ENCODE measurements at regions of chr4 and their contacts with region 1.

Region 1: DNA sequence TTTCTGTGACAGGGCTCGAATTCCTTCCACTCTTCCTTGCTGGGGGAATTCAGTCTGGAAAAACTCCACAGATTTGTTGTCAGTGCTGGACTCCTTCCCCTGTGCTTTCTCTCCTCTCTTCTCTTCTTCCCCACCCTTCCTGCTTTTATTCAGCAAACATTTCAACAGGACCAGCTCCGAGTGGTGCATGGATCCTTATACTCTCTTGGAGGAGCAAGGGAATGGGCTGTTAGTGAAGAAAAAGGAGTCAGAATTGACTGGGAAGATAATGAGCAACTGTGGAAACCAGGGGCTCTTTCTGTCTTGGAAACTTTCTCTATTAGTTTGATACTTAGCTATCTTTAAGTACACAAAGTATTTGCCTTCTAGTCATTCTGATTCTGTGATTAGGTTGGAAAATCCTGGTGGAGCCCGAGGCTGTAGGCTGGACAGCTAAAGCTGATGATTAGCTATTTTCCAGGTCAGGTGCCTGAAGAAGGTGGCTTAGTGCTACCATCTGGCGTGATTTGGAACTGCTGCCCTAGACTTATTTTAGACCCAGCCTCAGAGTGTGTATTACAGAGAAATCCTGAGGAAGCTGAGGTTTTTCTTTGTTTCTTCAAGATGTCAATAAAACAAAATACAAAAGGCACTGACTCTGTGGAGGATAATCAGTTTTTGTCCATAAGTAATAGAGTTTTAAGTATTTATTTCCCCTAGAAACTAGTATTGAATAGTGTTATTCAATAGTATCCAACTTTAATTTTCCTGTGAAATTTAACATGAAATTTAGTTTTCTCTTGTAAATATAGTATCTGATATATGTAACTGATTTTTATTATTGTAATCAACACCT is 38.4 kb downstream of the NAP1L5 start:
- DNase-seq: peak; percentile 49 to 67
- H3K4me3 ChIP-seq: no peak overlapping the region
- H3K27ac ChIP-seq: peak overlapping the region; percentile 59
- H3K4me1 ChIP-seq: peaks cover 31% of the 10 kb centered on the region
- H3K27me3 ChIP-seq: no peaks in the 10 kb centered on the region
- CTCF ChIP-seq: peak; percentile 72

Region 2: GRCh38 chr4:88528861-88529260 is 130.4 kb before region 1 on chr4:
- CTCF ChIA-PET with region 1: interaction called, 4 read pairs
- POLR2A ChIA-PET with region 1: interaction called, 6 read pairs
- intact Hi-C with region 1: loop called (anchors 2 kb)
- DNase-seq: no peak
- H3K4me3 ChIP-seq: no peak overlapping the region
- H3K27ac ChIP-seq: no peak overlapping the region
- H3K4me1 ChIP-seq: peaks cover 20% of the 10 kb centered on the region
- H3K27me3 ChIP-seq: no peaks in the 10 kb centered on the region
- CTCF ChIP-seq: peak; percentile 55

Region 3: DNA sequence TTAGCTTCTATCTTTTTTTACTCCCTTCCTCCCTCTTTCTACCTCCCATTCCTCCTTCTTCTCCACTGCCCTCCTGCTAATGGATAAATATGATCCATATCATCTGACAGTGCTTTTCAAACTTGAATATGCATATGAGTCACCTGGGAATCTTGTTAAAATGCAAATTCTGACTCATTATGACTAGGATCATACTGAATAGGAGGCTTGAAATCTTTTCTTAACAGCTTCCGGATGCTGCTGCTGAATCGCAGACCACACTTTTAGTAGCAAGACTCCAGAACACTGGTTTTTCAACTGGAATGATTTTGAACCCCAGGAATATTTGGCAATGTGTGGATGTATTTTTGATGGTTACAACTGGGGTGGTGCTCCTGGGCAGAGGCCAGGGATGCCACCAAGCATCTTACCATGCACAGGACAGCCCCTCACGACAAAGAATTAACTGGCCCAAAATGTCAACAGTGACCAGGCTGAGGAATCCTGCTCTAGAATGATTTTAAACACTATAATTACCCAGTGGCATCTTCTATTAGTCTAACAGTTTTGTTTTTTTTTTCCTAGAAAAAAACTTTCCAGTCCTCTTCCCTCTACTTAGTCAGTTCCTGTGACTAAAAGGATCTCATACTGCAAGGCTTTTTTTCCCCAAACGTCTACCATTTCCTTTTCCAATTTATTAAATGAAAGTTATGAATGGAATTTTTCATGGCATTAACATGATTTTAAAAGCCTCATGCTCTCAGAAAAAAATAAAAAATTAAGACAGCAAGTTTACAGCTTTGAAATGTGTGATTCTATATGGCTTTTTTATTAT is 125.1 kb before region 1 on chr4:
- CTCF ChIA-PET with region 1: interaction called, 9 read pairs
- POLR2A ChIA-PET with region 1: interaction called, 9 read pairs
- intact Hi-C with region 1: loop called (anchors 1 kb)
- DNase-seq: peak in 1 of 2 experiments; percentile 55
- H3K4me3 ChIP-seq: no peak overlapping the region
- H3K27ac ChIP-seq: 0 out of 2 replicates have a peak overlapping the region, but pooled peaks have one; percentile 30
- H3K4me1 ChIP-seq: peaks cover 3% of the 10 kb centered on the region; the same call in 1 of the 2 replicates
- H3K27me3 ChIP-seq: no peaks in the 10 kb centered on the region
- CTCF ChIP-seq: no peak

Region 4: GRCh38 chr4:88591787-88592599 is 67.3 kb before region 1 on chr4 and contains the start of gene HERC3:
- CTCF ChIA-PET with region 1: interaction called, 5 read pairs
- POLR2A ChIA-PET with region 1: interaction called, 4 read pairs
- intact Hi-C with region 1: loop called (anchors 2 kb)
- DNase-seq: peak; percentile 59 to 87
- H3K4me3 ChIP-seq: peak within 1 kb of the TSS; percentile 70
- H3K27ac ChIP-seq: peak within 1 kb of the TSS; percentile 50
- H3K4me1 ChIP-seq: 0 out of 2 replicates have a peak, but pooled peaks cover 8% of the 10 kb centered on the region
- H3K27me3 ChIP-seq: no peaks in the 10 kb centered on the region
- CTCF ChIP-seq: no peak
- total RNA-seq, gene HERC3: 14.7 and 16.9 TPM in 2 replicates

Measured in PC-9 (cell line).